K562 (cell line): ENCODE measurements at regions of chr19 and their contacts with region 1.

Region 1: DNA sequence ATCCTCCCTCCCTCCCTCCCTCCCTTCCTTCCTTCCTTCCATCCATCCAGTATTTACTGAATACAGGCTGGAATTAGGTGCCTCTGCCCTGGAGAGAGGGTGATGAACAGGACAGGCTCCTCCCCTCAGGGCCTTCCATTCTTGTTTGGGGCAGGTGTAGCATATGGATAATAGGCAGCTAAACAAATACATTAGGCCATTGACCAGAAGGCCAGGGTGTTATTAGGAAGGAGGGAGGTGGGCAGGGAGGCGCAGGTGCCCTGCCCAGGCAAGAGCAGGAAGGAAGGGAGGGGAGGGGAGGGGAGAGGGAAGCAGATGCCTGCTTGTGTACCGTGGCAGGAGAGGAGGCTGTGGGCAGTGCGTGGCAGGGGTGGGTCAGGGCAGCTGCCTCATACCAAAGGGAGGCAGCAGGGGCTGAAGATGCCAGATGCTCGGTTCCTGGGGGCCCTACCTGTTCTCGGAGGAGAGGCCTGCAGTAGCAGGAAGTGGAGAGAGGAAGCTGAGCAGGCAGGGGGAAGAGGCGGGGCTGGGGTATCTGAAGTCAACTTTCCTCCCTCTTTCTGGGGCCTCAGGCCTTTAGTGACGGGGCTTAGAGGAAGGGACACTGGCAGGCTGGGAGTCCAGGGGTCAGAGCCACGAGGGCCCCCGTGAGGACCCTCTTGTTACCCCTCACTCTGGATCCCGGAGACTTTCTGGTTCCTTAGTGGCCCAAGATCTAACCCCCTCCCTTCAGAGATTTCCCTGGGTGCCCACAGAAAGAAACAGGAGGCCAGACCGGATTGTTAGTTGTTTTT is at the start of gene RINL:
- DNase-seq: peak; percentile 48 to 61 (median 52)
- ATAC-seq: peak; percentile 82
- H3K4me3 ChIP-seq: peak within 1 kb of the TSS; percentile 28
- H3K27ac ChIP-seq: peak within 1 kb of the TSS; percentile 8
- H3K4me1 ChIP-seq: peaks cover 16 to 53% of the 10 kb centered on the region in 2 experiments; a peak in 4 of 5 replicates
- H3K27me3 ChIP-seq: no peaks in the 10 kb centered on the region
- CTCF ChIP-seq: no peak
- EP300 ChIP-seq: no peak
- POLR2A ChIP-seq: 0 out of 2 replicates have a peak, but pooled peaks have one; percentile 25
- RAD21 ChIP-seq: no peak
- polyA plus RNA-seq, gene RINL: 0.82 to 1.1 TPM

Region 2: DNA sequence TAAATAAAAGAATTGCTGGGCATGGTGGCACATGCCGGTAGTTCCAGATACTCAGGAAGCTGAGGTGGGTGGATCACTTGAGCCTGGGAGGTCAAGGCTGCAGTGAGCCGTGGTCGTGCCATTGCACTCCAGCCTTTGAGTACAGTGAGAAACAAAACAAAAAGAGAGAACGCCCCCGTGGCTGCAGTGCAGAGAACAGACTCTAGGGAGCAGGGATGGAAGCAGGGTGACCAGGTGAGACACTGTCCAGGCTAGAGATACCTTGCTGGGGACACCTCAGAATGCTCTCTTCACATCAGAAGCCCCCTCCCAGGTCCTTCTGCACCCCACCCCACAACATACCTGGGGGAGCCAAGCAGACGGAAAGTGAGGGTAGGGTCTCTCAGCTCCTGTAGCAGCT is 285.0 kb before region 1 on chr19:
- CTCF ChIA-PET with region 1: no interaction called
- POLR2A ChIA-PET with region 1: no interaction called
- in situ Hi-C with region 1: no loop called
- intact Hi-C with region 1: no loop called
- DNase-seq: no peak
- ATAC-seq: no peak
- H3K4me3 ChIP-seq: no peak overlapping the region
- H3K27ac ChIP-seq: no peak overlapping the region
- H3K4me1 ChIP-seq: peaks cover 10 to 24% of the 10 kb centered on the region in 2 experiments; a peak in 4 of 5 replicates
- H3K27me3 ChIP-seq: no peaks in the 10 kb centered on the region
- CTCF ChIP-seq: peak in 1 of 3 experiments; percentile 15; a peak in 1 of 6 replicates
- EP300 ChIP-seq: no peak
- POLR2A ChIP-seq: no peak
- RAD21 ChIP-seq: no peak

Region 3: DNA sequence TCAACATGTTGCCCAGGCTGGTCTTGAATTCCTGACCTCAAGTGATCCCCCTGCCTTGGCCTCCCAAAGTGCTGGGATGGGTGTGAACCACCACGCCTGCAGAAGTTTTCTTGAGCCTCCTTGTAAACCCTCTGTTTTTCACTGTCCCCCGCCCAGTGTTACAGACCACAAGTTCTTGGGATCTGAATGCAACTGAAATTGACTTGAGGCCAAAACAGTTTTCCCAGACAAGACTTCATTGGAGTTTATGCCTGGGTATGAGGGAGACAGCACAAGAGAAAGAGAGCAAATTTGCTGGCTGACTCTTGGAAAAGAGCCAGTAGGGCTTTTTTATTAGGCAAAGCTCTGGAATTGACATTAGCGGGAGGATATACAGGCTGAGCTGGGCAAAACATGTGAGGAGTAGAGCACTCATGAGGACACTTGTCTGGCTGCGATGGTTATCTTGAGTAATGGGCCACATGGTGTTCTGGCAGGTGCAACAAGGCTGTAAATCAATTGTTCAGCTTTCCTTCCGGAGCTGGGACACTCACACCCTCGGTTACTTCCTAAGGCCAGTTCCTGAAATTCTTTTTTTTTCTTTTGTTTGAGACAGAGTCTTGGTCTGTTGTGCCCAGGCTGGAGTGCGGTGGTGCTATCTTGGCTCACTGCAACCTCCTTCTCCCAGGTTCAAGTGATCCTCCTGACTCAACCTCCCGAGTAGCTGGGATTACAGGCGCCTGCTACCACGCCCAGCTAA is 15.5 kb before region 1 on chr19:
- CTCF ChIA-PET with region 1: no interaction called
- POLR2A ChIA-PET with region 1: interaction called, 17 read pairs
- in situ Hi-C with region 1: no loop called
- intact Hi-C with region 1: no loop called
- DNase-seq: peak in 1 of 4 experiments; percentile 77
- ATAC-seq: peak; percentile 80
- H3K4me3 ChIP-seq: no peak overlapping the region
- H3K27ac ChIP-seq: peak overlapping the region; percentile 33; the same call in 2 of the 3 replicates
- H3K4me1 ChIP-seq: peaks cover 27 to 36% of the 10 kb centered on the region in 2 experiments
- H3K27me3 ChIP-seq: no peaks in the 10 kb centered on the region
- CTCF ChIP-seq: no peak
- EP300 ChIP-seq: peak; percentile 82
- POLR2A ChIP-seq: no peak
- RAD21 ChIP-seq: 0 out of 4 replicates have a peak, but pooled peaks of 1 of the 2 experiments have one; percentile 7